Activated CD8-positive, alpha-beta T cell treated with anti-CD3 and anti-CD28 coated beads for 36 hours (primary cell): ENCODE measurements at regions of chr14 and their contacts with region 1.

Region 1: GRCh38 chr14:69242311-69243224 is 17.4 kb upstream of the GALNT16 start:
- DNase-seq: peak; percentile 81
- ATAC-seq: peak; percentile 87
- H3K4me3 Mint-ChIP-seq: no peak overlapping the region
- H3K27ac Mint-ChIP-seq: no peak overlapping the region
- H3K4me1 Mint-ChIP-seq: no peaks in the 10 kb centered on the region
- H3K27me3 Mint-ChIP-seq: no peaks in the 10 kb centered on the region
- CTCF ChIP-seq: peak; percentile 91

Region 2: DNA sequence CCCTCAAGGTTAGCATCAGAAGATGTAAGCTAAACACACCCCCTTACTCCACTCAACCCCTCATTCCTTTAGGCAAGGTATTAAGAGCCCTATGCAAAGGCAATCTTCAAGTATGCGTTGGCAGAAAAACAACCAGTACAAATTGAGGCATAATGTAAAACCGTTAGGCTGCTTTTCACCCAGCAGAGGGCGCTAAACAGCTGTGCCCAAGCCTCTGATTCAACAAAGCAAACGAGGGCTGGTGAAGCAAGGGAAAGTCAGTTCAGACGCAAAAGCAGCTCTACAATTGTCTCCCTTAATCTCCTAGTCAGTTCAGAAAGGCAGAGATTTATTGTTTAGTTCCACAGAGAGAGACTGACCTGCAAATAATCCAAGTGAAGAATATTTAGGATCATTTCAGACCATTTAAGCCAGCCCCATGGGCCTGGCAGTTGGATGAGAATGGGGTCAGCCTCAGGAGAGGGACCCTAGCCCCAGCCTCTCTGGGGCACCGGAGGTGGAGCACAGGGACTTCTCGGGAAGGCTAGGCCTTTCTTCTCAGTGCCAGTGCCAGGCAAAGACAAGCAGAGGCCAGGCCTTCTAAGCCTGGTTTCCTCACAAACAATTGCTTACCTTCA is 113.2 kb before region 1 on chr14:
- CTCF ChIA-PET with region 1: interaction called, 22 read pairs
- POLR2A ChIA-PET with region 1: no interaction called
- intact Hi-C with region 1: no loop called
- DNase-seq: peak; percentile 88
- ATAC-seq: peak; percentile 70
- H3K4me3 Mint-ChIP-seq: no peak overlapping the region
- H3K27ac Mint-ChIP-seq: peak overlapping the region; percentile 67
- H3K4me1 Mint-ChIP-seq: peaks cover 69% of the 10 kb centered on the region
- H3K27me3 Mint-ChIP-seq: no peaks in the 10 kb centered on the region
- CTCF ChIP-seq: peak; percentile 88

Region 3: DNA sequence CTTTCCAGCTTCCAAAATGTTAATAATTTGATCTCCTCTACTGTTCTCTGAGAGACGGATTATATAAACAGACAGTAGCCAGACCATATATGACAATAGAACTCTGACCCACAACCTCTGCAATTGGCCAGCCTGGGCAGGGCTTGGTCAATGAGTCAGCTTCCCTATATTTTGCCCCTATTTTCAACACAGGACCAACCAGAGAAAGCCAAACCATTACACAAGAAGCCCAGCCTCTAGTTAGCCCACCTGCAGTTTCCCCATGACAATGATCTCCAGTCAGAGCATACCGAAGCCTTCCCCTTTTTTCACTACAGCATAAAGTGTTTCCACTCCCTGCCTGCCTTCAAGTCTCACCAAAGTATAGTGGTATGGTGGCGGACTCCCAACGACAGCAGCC is 58.8 kb before region 1 on chr14:
- CTCF ChIA-PET with region 1: no interaction called
- POLR2A ChIA-PET with region 1: no interaction called
- intact Hi-C with region 1: no loop called
- DNase-seq: no peak
- ATAC-seq: no peak
- H3K4me3 Mint-ChIP-seq: no peak overlapping the region
- H3K27ac Mint-ChIP-seq: no peak overlapping the region
- H3K4me1 Mint-ChIP-seq: no peaks in the 10 kb centered on the region
- H3K27me3 Mint-ChIP-seq: no peaks in the 10 kb centered on the region
- CTCF ChIP-seq: no peak

Region 4: GRCh38 chr14:69214393-69214792 is 28.2 kb before region 1 on chr14:
- CTCF ChIA-PET with region 1: no interaction called
- POLR2A ChIA-PET with region 1: no interaction called
- intact Hi-C with region 1: no loop called
- DNase-seq: no peak
- ATAC-seq: no peak
- H3K4me3 Mint-ChIP-seq: no peak overlapping the region
- H3K27ac Mint-ChIP-seq: no peak overlapping the region
- H3K4me1 Mint-ChIP-seq: no peaks in the 10 kb centered on the region
- H3K27me3 Mint-ChIP-seq: no peaks in the 10 kb centered on the region
- CTCF ChIP-seq: no peak

Region 5: DNA sequence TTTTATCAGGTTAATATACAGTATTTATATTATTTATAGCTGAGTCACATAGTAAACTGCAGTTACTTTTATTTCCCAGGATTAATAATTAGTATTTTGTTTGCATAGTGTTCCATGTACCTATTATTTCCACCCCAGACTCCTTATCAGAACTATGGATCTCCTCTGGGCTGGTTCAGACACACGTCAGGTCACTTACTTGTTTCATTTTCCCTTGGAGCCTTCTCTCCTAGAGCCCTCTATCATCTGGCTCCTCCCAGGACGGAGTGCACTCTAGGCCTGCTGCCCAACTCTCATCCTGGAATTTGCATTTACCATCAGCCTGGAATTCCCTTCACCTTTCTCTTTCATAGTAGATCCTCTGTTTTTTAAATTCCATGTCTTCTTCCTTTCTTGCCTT is 11.1 kb before region 1 on chr14:
- CTCF ChIA-PET with region 1: interaction called, 22 read pairs
- POLR2A ChIA-PET with region 1: no interaction called
- intact Hi-C with region 1: no loop called
- DNase-seq: no peak
- ATAC-seq: no peak
- H3K4me3 Mint-ChIP-seq: no peak overlapping the region
- H3K27ac Mint-ChIP-seq: no peak overlapping the region
- H3K4me1 Mint-ChIP-seq: peaks cover 6% of the 10 kb centered on the region
- H3K27me3 Mint-ChIP-seq: no peaks in the 10 kb centered on the region
- CTCF ChIP-seq: no peak

Region 6: GRCh38 chr14:69274321-69274720 is 31.8 kb after region 1 on chr14:
- CTCF ChIA-PET with region 1: interaction called, 10 read pairs
- POLR2A ChIA-PET with region 1: no interaction called
- intact Hi-C with region 1: no loop called
- DNase-seq: no peak
- ATAC-seq: no peak
- H3K4me3 Mint-ChIP-seq: no peak overlapping the region
- H3K27ac Mint-ChIP-seq: no peak overlapping the region
- H3K4me1 Mint-ChIP-seq: no peaks in the 10 kb centered on the region
- H3K27me3 Mint-ChIP-seq: peaks cover 2% of the 10 kb centered on the region
- CTCF ChIP-seq: no peak

Region 7: DNA sequence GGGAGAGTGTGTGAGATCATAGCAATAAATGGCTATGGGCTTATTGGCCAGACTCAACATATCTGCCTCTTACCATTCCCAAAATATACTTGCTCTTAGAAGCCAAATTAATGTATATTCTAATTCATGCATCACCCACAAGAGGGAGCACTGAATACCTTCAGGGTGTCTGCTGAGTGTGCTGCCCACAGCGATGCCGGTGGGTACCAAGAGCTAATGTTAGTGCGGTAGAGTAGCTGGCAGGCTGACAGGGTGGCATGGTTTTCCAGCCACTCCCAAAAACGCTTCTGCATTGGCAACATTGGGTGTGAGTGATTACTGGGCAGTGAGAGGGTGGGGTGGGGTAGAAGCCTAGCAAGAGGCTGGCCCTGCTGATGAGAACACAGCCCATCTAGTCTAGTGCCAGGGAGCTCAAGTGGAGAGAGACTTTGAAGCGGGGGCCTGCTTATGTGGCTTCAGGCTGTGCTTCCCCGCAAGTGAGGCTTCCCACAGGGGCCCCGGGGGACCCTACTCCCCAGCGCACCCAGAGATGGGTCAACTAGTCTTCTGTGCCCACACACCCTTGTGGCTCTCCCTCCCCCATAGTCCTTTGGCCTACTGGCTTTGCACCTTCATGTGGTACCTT is 232.7 kb after region 1 on chr14:
- CTCF ChIA-PET with region 1: interaction called, 21 read pairs
- POLR2A ChIA-PET with region 1: no interaction called
- intact Hi-C with region 1: no loop called
- DNase-seq: peak; percentile 10
- ATAC-seq: peak; percentile 70
- H3K4me3 Mint-ChIP-seq: no peak overlapping the region
- H3K27ac Mint-ChIP-seq: no peak overlapping the region
- H3K4me1 Mint-ChIP-seq: no peaks in the 10 kb centered on the region
- H3K27me3 Mint-ChIP-seq: peaks cover 3% of the 10 kb centered on the region
- CTCF ChIP-seq: peak; percentile 36